Ascending aorta (tissue), 2 donors: ENCODE measurements at regions of chr17 and their contacts with region 1.

Region 1: GRCh38 chr17:1716076-1716995 is 6.2 kb upstream of the TLCD2 start:
- DNase-seq: peak; percentile 100
- H3K4me3 ChIP-seq: peak overlapping the region; percentile 99
- H3K27ac ChIP-seq: peak overlapping the region; percentile 100
- H3K4me1 ChIP-seq: peaks cover 11 to 37% of the 10 kb centered on the region in 2 donors
- H3K27me3 ChIP-seq: no peaks in the 10 kb centered on the region
- CTCF ChIP-seq: peak in 2 of 3 experiments; percentile 5 to 26

Region 2: GRCh38 chr17:1561400-1562175 is 154.7 kb before region 1 on chr17:
- intact Hi-C with region 1: loop called (anchors 5 kb)
- DNase-seq: no peak
- H3K4me3 ChIP-seq: peak overlapping the region; percentile 97 to 98
- H3K27ac ChIP-seq: peak overlapping the region; percentile 89 to 91
- H3K4me1 ChIP-seq: peaks cover 7 to 17% of the 10 kb centered on the region in 2 donors
- H3K27me3 ChIP-seq: no peaks in the 10 kb centered on the region
- CTCF ChIP-seq: peak; percentile 16 to 46 (median 17)

Region 3: GRCh38 chr17:1648963-1649843 is 67.1 kb before region 1 on chr17:
- intact Hi-C with region 1: loop called (anchors 2 kb)
- DNase-seq: peak; percentile 86 to 98
- H3K4me3 ChIP-seq: peak overlapping the region; percentile 74 to 92
- H3K27ac ChIP-seq: peak overlapping the region; percentile 94 to 99
- H3K4me1 ChIP-seq: peaks cover 4 to 22% of the 10 kb centered on the region in 2 donors
- H3K27me3 ChIP-seq: no peaks in the 10 kb centered on the region
- CTCF ChIP-seq: peak in 2 of 3 experiments; percentile 94 to 97

Region 4: GRCh38 chr17:1783834-1784611 is 67.7 kb after region 1 on chr17:
- intact Hi-C with region 1: loop called (anchors 1 kb)
- DNase-seq: peak; percentile 65 to 94
- H3K4me3 ChIP-seq: peak overlapping the region in 1 of 2 donors; percentile 20
- H3K27ac ChIP-seq: peak overlapping the region; percentile 87 to 94
- H3K4me1 ChIP-seq: peaks cover 4 to 51% of the 10 kb centered on the region in 2 donors
- H3K27me3 ChIP-seq: no peaks in the 10 kb centered on the region
- CTCF ChIP-seq: peak; percentile 58 to 63 (median 61)

Region 5: GRCh38 chr17:2401426-2402221 is 685.3 kb after region 1 on chr17:
- intact Hi-C with region 1: loop called (anchors 5 kb)
- DNase-seq: peak; percentile 100
- H3K4me3 ChIP-seq: peak overlapping the region; percentile 84 to 86
- H3K27ac ChIP-seq: peak overlapping the region; percentile 97 to 98
- H3K4me1 ChIP-seq: peaks cover 26 to 60% of the 10 kb centered on the region in 2 donors
- H3K27me3 ChIP-seq: no peaks in the 10 kb centered on the region
- CTCF ChIP-seq: no peak